ENCODE measurements at regions of chr2 and their contacts with region 1.

Region 1: GRCh38 chr2:151238527-151239487 is 22.9 kb downstream of the RBM43 start:
- H3K4me3 ChIP-seq: no peak overlapping the region
- H3K27ac ChIP-seq: no peak overlapping the region
- H3K4me1 ChIP-seq: peaks cover 3% of the 10 kb centered on the region; the same call in 1 of the 2 replicates
- CTCF ChIP-seq: peak; percentile 58; the same call in 1 of the 2 replicates

Region 2: GRCh38 chr2:149597668-149598326 is 1641.0 kb before region 1 on chr2:
- CTCF ChIA-PET with region 1: interaction called, 42 read pairs
- POLR2A ChIA-PET with region 1: no interaction called
- H3K4me3 ChIP-seq: no peak overlapping the region
- H3K27ac ChIP-seq: no peak overlapping the region
- H3K4me1 ChIP-seq: no peaks in the 10 kb centered on the region; the same call in 1 of the 2 replicates
- CTCF ChIP-seq: peak; percentile 88

Region 3: DNA sequence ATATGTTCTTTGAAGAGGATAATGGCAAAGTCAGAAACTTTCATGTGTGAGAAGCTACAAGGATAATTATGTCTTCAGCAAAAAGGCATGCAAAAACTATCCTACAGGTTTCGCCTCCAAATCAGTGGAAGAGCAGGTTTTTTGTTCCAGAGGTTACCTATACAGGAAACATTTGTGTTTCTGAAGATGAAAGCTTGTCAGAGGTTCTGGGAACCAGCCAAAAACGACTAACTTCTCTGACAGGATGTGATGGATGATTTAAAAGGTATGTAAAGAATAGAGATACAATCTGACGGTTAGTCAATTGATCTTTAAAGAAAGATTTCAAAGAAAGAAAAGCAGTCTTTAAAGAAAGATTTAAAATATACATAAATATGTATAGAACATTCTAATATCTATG is 788.9 kb before region 1 on chr2:
- CTCF ChIA-PET with region 1: no interaction called
- POLR2A ChIA-PET with region 1: no interaction called
- H3K4me3 ChIP-seq: no peak overlapping the region
- H3K27ac ChIP-seq: no peak overlapping the region
- H3K4me1 ChIP-seq: no peaks in the 10 kb centered on the region
- CTCF ChIP-seq: no peak

Region 4: GRCh38 chr2:151437630-151438029 is 198.8 kb after region 1 on chr2:
- CTCF ChIA-PET with region 1: interaction called, 12 read pairs
- POLR2A ChIA-PET with region 1: no interaction called
- H3K4me3 ChIP-seq: no peak overlapping the region
- H3K27ac ChIP-seq: no peak overlapping the region
- H3K4me1 ChIP-seq: no peaks in the 10 kb centered on the region
- CTCF ChIP-seq: no peak